Common myeloid progenitor, CD34-positive (primary cell): ENCODE measurements at regions of chr11 and their contacts with region 1.

Region 1: GRCh38 chr11:68257475-68258362 is 14.1 kb downstream of the C11orf24 start:
- DNase-seq: peak; percentile 90 to 96 (median 92)
- H3K4me3 ChIP-seq: no peak overlapping the region
- H3K27ac ChIP-seq: no peak overlapping the region
- H3K4me1 ChIP-seq: peaks cover 0 to 4% (median 2%) of the 10 kb centered on the region in 4 experiments
- H3K27me3 ChIP-seq: no peaks in the 10 kb centered on the region

Region 2: DNA sequence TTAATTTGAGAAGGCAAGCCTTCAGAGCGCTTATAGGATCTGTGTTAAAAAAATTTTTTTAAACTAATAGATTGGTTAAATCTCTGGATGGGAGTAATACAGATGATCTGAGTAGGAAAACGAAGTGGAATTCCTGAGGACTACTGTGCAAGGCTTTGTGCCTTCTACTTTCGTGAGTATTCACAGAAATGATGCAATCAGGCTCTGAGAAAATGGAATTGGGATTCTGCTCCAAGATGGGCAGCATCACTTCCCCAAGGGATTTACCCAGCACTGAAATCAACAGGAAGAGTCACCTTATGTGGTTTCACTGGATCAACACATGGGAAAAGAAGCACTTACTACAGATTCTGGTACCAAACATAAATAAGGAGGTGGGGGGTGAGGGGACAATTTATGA is 57.1 kb before region 1 on chr11:
- CTCF ChIA-PET with region 1: no interaction called
- POLR2A ChIA-PET with region 1: no interaction called
- DNase-seq: no peak
- H3K4me3 ChIP-seq: no peak overlapping the region
- H3K27ac ChIP-seq: no peak overlapping the region
- H3K4me1 ChIP-seq: peaks cover 0 to 4% (median 0%) of the 10 kb centered on the region in 4 experiments
- H3K27me3 ChIP-seq: no peaks in the 10 kb centered on the region

Region 3: GRCh38 chr11:68271781-68272608 is 14.3 kb after region 1 on chr11 and contains the start of gene C11orf24:
- CTCF ChIA-PET with region 1: interaction called, 55 read pairs
- POLR2A ChIA-PET with region 1: interaction called, 5 read pairs
- DNase-seq: peak; percentile 94 to 97 (median 96)
- H3K4me3 ChIP-seq: peak within 1 kb of the TSS; percentile 68 to 89 (median 81)
- H3K27ac ChIP-seq: peak within 1 kb of the TSS; percentile 66 to 85
- H3K4me1 ChIP-seq: peaks cover 8 to 28% (median 19%) of the 10 kb centered on the region in 4 experiments
- H3K27me3 ChIP-seq: no peaks in the 10 kb centered on the region

Region 4: GRCh38 chr11:68370211-68371111 is 112.7 kb after region 1 on chr11:
- CTCF ChIA-PET with region 1: no interaction called
- POLR2A ChIA-PET with region 1: no interaction called
- DNase-seq: peak; percentile 18 to 53 (median 46)
- H3K4me3 ChIP-seq: no peak overlapping the region
- H3K27ac ChIP-seq: no peak overlapping the region
- H3K4me1 ChIP-seq: peaks cover 0 to 53% (median 31%) of the 10 kb centered on the region in 4 experiments
- H3K27me3 ChIP-seq: no peaks in the 10 kb centered on the region

Region 5: GRCh38 chr11:68383976-68384501 is 126.3 kb after region 1 on chr11:
- CTCF ChIA-PET with region 1: interaction called, 12 read pairs
- POLR2A ChIA-PET with region 1: no interaction called
- DNase-seq: peak; percentile 27 to 57 (median 53)
- H3K4me3 ChIP-seq: no peak overlapping the region
- H3K27ac ChIP-seq: no peak overlapping the region
- H3K4me1 ChIP-seq: peaks cover 4 to 36% (median 33%) of the 10 kb centered on the region in 4 experiments
- H3K27me3 ChIP-seq: no peaks in the 10 kb centered on the region